ENCODE measurements at regions of chr17 and their contacts with region 1.

Region 1: GRCh38 chr17:46832945-46833839 is 14.7 kb upstream of the WNT3 start:
- DNase-seq: no peak
- ATAC-seq: no peak
- H3K4me3 ChIP-seq: no peak overlapping the region
- H3K4me3 Mint-ChIP-seq: no peak overlapping the region
- H3K27ac ChIP-seq: no peak overlapping the region
- H3K27ac Mint-ChIP-seq: no peak overlapping the region
- H3K4me1 ChIP-seq: no peaks in the 10 kb centered on the region
- H3K4me1 Mint-ChIP-seq: peaks cover 4% of the 10 kb centered on the region
- H3K27me3 ChIP-seq: no peaks in the 10 kb centered on the region
- H3K27me3 Mint-ChIP-seq: peaks cover 15% of the 10 kb centered on the region
- CTCF ChIP-seq: no peak

Region 2: GRCh38 chr17:46894476-46895151 is 61.4 kb after region 1 on chr17:
- CTCF ChIA-PET with region 1: no interaction called
- POLR2A ChIA-PET with region 1: no interaction called
- intact Hi-C with region 1: loop called in 1 of 2 experiments (anchors 10 kb)
- DNase-seq: no peak
- ATAC-seq: no peak
- H3K4me3 ChIP-seq: no peak overlapping the region
- H3K4me3 Mint-ChIP-seq: no peak overlapping the region
- H3K27ac ChIP-seq: no peak overlapping the region
- H3K27ac Mint-ChIP-seq: no peak overlapping the region
- H3K4me1 ChIP-seq: no peaks in the 10 kb centered on the region
- H3K4me1 Mint-ChIP-seq: no peaks in the 10 kb centered on the region
- H3K27me3 ChIP-seq: peaks cover 0 to 3% of the 10 kb centered on the region in 2 experiments
- H3K27me3 Mint-ChIP-seq: peaks cover 27% of the 10 kb centered on the region
- CTCF ChIP-seq: no peak

Measured in CD8-positive, alpha-beta T cell (primary cell).